Pancreas (tissue), 10 donors: ENCODE measurements at regions of chr9 and their contacts with region 1.

Region 1: DNA sequence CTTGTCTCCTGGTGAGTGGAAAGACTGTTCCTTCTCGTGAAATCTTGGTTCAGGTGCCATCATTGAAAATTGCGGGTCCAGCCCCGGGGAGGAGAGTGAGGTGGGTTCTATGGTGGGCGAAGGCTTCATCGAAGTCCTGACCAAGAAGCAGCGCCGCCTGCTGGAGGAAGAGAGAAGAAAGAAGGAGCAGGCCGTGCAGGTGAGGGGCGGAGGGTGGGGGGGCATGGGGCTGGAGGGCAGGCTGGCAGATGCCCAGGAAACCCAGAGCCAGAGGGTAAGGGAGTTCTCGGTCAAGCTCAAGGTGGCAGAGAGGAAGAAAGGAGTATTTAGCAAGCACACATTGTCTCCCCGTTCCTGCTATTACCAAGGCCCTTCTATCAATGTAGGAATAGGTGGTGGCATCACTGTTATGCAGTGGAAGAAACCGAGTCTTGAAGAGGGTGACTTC is 24.3 kb upstream of the POMT1 start:
- DNase-seq: peak in 4 of 6 donors; percentile 45 to 79 (median 54)
- ATAC-seq: peak in 3 of 4 donors; percentile 31 to 51 (median 41)
- H3K4me3 ChIP-seq: no peak overlapping the region
- H3K27ac ChIP-seq: no peak overlapping the region
- H3K4me1 ChIP-seq: no peaks in the 10 kb centered on the region
- H3K27me3 ChIP-seq: no peaks in the 10 kb centered on the region
- CTCF ChIP-seq: peak; percentile 13 to 34 (median 22)

Region 2: GRCh38 chr9:131349881-131350563 is 128.4 kb before region 1 on chr9:
- intact Hi-C with region 1: loop called in 1 of 3 experiments (anchors 10 kb)
- DNase-seq: peak; percentile 74 to 96 (median 84)
- ATAC-seq: peak; percentile 95 to 99 (median 98)
- H3K4me3 ChIP-seq: peak overlapping the region in 2 of 4 donors; percentile 12 to 26
- H3K27ac ChIP-seq: no peak overlapping the region
- H3K4me1 ChIP-seq: no peaks in the 10 kb centered on the region
- H3K27me3 ChIP-seq: no peaks in the 10 kb centered on the region
- CTCF ChIP-seq: peak; percentile 70 to 76 (median 75)